ENCODE measurements at regions of chr12 and their contacts with region 1.

Region 1: DNA sequence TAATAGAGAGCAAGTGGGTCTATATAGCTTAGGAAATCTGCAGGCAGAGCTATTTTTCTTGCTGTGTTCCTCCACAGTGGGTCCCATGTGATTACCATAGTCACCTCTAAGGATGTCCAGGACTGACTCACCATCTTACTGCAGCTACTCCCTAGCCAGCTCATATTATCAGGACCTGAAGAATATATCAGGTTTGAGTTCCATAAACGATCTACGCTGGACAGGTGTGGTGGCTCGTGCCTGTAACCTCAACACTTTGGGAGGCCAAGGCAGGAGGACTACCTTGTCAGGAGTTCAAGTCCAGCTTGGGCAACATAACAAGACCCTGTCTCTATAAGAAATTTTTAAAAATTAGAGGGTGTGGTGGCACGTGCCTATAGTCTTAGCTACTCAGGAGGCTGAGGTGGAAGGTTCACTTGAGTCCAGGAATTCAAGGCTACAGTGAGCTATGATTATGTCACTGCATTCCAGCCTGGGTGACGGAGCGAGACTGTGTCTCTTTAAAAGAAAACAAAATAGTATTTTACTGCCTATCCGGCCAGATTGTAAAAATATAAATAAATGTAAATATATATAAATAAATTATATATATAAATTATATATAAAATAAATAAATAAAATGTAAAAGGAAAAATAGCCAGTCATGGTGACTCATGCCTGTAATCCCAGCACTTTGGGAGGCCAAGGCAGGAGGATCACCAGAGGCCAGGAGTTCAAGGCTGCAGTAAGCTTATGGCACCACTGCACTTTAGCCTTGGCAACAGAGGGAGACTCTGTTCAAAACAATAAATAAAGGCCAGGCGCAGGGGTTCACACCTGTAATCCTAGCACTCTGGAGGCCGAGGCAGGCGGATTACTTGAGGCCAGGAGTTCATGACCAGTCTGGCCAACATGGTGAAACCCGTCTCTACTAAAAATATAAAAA is 6.9 kb upstream of the SPRYD4 start:
- DNase-seq: no peak
- H3K4me3 Mint-ChIP-seq: no peak overlapping the region
- H3K27ac Mint-ChIP-seq: no peak overlapping the region
- H3K4me1 Mint-ChIP-seq: peaks cover 5% of the 10 kb centered on the region
- H3K27me3 Mint-ChIP-seq: no peaks in the 10 kb centered on the region

Region 2: GRCh38 chr12:56104109-56104814 is 357.2 kb before region 1 on chr12 and contains the start of gene PA2G4:
- intact Hi-C with region 1: no loop called
- DNase-seq: peak; percentile 100
- H3K4me3 Mint-ChIP-seq: peak within 1 kb of the TSS; percentile 98
- H3K27ac Mint-ChIP-seq: peak within 1 kb of the TSS; percentile 98
- H3K4me1 Mint-ChIP-seq: peaks cover 38% of the 10 kb centered on the region
- H3K27me3 Mint-ChIP-seq: no peaks in the 10 kb centered on the region
- total RNA-seq, gene PA2G4: 453 and 472 TPM in 2 replicates

Region 3: GRCh38 chr12:56127888-56128669 is 333.4 kb before region 1 on chr12 and contains the start of gene ESYT1:
- intact Hi-C with region 1: no loop called
- DNase-seq: peak; percentile 99
- H3K4me3 Mint-ChIP-seq: peak within 1 kb of the TSS; percentile 98
- H3K27ac Mint-ChIP-seq: peak within 1 kb of the TSS; percentile 94
- H3K4me1 Mint-ChIP-seq: peaks cover 65% of the 10 kb centered on the region
- H3K27me3 Mint-ChIP-seq: no peaks in the 10 kb centered on the region
- total RNA-seq, gene ESYT1: 155 and 158 TPM in 2 replicates

Region 4: GRCh38 chr12:56206457-56207166 is 254.9 kb before region 1 on chr12:
- intact Hi-C with region 1: loop called (anchors 5 kb)
- DNase-seq: peak; percentile 81
- H3K4me3 Mint-ChIP-seq: no peak overlapping the region
- H3K27ac Mint-ChIP-seq: no peak overlapping the region
- H3K4me1 Mint-ChIP-seq: peaks cover 2% of the 10 kb centered on the region
- H3K27me3 Mint-ChIP-seq: no peaks in the 10 kb centered on the region

Region 5: GRCh38 chr12:56518570-56518969 is 57.1 kb after region 1 on chr12:
- intact Hi-C with region 1: no loop called
- DNase-seq: no peak
- H3K4me3 Mint-ChIP-seq: no peak overlapping the region
- H3K27ac Mint-ChIP-seq: no peak overlapping the region
- H3K4me1 Mint-ChIP-seq: peaks cover 33% of the 10 kb centered on the region
- H3K27me3 Mint-ChIP-seq: peaks cover under 1% of the 10 kb centered on the region

Region 6: GRCh38 chr12:56529290-56530055 is 68.0 kb after region 1 on chr12:
- intact Hi-C with region 1: no loop called
- DNase-seq: no peak
- H3K4me3 Mint-ChIP-seq: no peak overlapping the region
- H3K27ac Mint-ChIP-seq: no peak overlapping the region
- H3K4me1 Mint-ChIP-seq: no peaks in the 10 kb centered on the region
- H3K27me3 Mint-ChIP-seq: no peaks in the 10 kb centered on the region